ENCODE measurements at regions of chr5 and their contacts with region 1.

Region 1: DNA sequence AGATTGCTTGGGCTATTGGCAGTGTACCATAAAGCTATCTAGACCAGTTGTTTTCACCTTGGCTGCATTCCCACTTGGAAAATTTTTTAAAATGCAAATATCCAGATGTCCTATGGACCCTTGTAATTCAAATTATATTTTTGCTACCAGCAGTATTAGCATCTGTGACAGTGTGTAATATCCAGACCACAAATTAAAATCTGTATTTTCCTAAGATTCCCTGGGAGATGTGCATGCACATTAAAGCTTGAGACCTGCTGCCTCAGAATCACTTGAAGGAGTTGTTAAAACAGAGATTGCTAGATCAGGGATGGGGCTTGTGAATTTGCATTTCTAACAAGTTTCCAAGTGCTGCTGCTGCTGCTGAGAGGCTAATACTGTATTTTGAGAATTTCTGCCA is 381.2 kb upstream of the PDE4D start:
- DNase-seq: no peak
- ATAC-seq: no peak
- H3K4me3 ChIP-seq: no peak overlapping the region
- H3K27ac ChIP-seq: no peak overlapping the region
- H3K4me1 ChIP-seq: peaks cover 2 to 12% of the 10 kb centered on the region in 2 donors
- H3K27me3 ChIP-seq: no peaks in the 10 kb centered on the region

Region 2: DNA sequence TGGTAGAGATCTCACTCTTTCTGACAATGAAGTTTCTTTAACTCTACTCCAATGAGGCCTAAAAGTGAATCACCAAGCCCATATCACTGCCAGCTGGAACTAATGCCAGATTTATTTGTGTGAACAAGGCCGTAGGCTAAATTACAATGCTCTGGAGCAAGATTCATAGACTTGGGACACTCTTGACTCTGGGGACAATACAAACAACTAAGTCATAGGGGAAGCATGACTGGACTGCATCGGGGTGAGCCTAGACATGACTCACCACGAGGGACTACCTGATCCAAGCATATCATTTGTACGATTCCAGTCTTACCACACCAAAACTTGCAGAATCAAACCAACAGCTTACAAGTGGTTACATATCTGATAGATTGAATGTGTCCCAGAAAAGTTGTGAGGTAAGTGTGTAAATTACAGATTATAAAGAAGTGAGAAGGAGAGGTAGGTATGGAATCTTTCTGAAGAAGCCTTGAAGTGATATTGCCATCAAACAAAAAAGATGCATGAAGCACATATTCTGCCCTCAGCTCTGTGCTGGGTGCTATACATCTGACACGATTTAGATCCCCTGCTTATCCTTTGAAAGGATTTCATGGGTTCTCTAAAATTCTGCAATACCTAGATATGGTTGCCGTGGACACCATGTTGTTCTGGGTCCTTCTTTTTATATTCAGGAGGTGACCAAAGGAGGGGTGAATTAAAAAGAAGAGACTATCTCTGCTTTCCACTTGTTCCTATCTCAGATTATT is 181.9 kb before region 1 on chr5:
- intact Hi-C with region 1: no loop called
- DNase-seq: no peak
- ATAC-seq: peak; percentile 56
- H3K4me3 ChIP-seq: no peak overlapping the region
- H3K27ac ChIP-seq: no peak overlapping the region
- H3K4me1 ChIP-seq: peaks cover 0 to 3% of the 10 kb centered on the region in 2 donors
- H3K27me3 ChIP-seq: no peaks in the 10 kb centered on the region

Region 3: GRCh38 chr5:60339691-60340191 is 65.0 kb after region 1 on chr5:
- intact Hi-C with region 1: loop called in 1 of 2 experiments (anchors 5 kb)
- DNase-seq: peak; percentile 74 to 81
- ATAC-seq: peak; percentile 80
- H3K4me3 ChIP-seq: peak overlapping the region in 1 of 2 donors; percentile 28
- H3K27ac ChIP-seq: peak overlapping the region; percentile 28 to 80
- H3K4me1 ChIP-seq: peaks cover 4 to 10% of the 10 kb centered on the region in 2 donors
- H3K27me3 ChIP-seq: no peaks in the 10 kb centered on the region

Region 4: DNA sequence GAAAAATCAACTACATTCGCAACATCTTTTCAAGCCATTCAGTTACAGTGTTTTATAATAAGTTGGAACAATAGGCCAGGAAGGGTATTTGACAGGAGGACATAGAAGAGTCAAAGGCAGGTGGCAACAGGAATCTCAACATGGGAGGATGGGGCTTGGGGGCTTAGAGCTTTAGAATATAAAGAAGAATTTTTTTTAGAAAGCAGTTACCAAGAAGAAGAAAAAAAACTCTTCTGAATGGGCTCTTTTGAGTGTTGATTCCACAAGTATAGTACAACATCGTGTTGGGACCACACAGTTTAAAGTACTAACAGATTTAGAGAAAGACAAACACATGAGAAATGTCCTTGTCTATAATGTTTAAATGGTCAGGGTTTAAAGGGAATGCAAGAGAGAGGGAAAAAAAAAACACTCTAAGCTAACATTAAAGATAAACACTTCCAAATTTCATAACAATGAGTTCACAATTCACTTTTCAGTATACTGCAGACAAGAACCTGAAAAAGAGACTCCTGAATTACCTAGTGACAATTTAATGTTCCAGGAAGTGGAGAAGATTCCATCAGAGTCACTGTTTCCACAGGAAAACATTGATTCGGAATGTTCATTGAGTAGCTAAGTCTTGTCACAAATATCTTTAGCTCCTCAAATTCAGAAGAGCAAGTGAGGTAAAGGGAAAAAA is 142.9 kb after region 1 on chr5:
- intact Hi-C with region 1: no loop called
- DNase-seq: no peak
- ATAC-seq: no peak
- H3K4me3 ChIP-seq: no peak overlapping the region
- H3K27ac ChIP-seq: no peak overlapping the region
- H3K4me1 ChIP-seq: peaks cover 0 to 1% of the 10 kb centered on the region in 2 donors
- H3K27me3 ChIP-seq: no peaks in the 10 kb centered on the region